ENCODE measurements at regions of chr3 and their contacts with region 1.

Region 1: DNA sequence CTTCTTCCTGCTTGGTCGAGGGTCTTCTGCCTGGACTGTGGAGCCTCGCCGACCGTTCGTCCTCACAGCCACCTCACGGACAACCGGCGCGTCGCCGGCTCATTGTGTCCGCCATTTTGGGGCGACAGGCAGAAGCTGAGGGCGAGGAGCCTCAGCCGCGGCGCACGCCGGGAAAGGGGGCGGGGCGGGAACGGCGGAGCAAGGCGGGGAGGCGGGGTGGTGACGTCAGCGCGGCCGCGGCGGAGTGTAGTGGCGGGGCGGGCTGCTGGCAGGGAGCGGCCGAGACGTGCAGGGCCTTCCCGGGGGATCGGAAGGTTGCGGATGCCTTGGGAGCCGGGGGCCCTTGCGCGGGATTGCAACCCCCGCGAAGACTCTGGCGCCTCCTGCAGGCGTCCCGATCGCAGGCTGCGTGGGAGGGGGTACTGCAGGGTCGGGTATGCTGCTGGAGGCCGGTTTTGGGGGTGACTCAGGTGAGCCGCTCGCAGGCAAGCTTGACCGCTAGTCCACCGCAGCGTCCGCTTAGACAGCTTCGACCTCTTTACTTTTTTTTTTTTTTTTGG is at the start of gene WDR82:
- DNase-seq: peak; percentile 98 to 99
- ATAC-seq: peak; percentile 93 to 95 (median 94)
- H3K4me3 ChIP-seq: peak within 1 kb of the TSS; percentile 77
- H3K27ac ChIP-seq: peak within 1 kb of the TSS; percentile 93
- H3K4me1 ChIP-seq: peaks cover 50% of the 10 kb centered on the region
- H3K27me3 ChIP-seq: no peaks in the 10 kb centered on the region
- CTCF ChIP-seq: peak; percentile 52
- total RNA-seq, gene WDR82: 62.1 to 93.1 (median 85.5) TPM

Region 2: GRCh38 chr3:52220380-52221026 is 58.1 kb before region 1 on chr3:
- intact Hi-C with region 1: no loop called
- DNase-seq: peak; percentile 86 to 93
- ATAC-seq: peak; percentile 68 to 78 (median 70)
- H3K4me3 ChIP-seq: no peak overlapping the region
- H3K27ac ChIP-seq: no peak overlapping the region
- H3K4me1 ChIP-seq: peaks cover 25% of the 10 kb centered on the region
- H3K27me3 ChIP-seq: no peaks in the 10 kb centered on the region
- CTCF ChIP-seq: peak; percentile 87

Region 3: DNA sequence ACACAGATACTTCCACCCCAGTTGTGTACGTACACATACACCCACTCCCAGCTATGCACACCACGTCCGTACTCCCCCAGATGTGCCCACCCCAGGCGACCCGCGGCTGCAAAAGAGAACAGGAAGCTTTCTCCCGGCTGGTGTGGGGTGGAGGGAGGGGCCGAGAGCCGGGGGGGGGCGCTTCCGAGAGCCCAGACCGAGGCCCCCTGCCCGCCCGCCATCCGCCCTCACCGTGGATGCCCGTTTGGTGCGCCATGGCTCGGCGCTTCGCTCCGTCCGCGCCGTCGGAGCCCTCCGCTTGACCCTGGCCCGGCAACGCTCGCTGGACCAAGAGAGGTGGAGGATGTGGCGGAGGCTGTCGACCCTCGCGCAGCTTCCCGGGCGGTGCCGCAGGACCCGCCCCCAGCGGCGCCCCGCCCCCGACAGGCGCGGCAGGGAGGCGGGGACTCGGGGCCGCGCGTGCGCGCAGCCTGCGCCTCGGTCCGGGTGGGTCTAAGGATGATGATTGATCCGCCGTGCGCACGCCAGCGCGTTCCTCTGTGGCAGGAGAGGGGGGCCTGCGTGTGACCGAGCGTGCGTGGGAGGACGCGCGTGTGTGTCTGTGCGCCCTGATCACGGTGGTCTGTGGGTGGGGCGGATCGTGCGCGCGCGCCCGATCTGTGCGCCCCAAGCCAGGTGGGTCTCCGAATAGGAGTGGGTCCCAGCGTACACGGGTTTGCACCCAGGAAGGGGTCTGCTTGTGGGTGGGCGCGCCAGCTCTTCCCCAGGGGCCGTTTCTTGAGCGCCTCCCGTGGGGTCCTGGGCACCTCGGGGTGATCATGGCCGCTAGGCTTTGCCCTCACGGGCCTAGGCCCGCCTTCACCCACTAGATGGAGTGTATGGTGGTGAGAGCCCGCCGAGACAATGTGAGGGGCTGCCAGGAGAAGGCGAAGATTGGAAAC is 39.6 kb before region 1 on chr3 and contains the start of gene TWF2:
- intact Hi-C with region 1: loop called (anchors 2 to 5 kb)
- DNase-seq: peak; percentile 80 to 86
- ATAC-seq: peak; percentile 53 to 61 (median 56)
- H3K4me3 ChIP-seq: peak within 1 kb of the TSS; percentile 80
- H3K27ac ChIP-seq: peak within 1 kb of the TSS; percentile 94
- H3K4me1 ChIP-seq: peaks cover 52% of the 10 kb centered on the region
- H3K27me3 ChIP-seq: no peaks in the 10 kb centered on the region
- CTCF ChIP-seq: peak; percentile 33
- total RNA-seq, gene TWF2: 74.9 to 224 (median 138) TPM

Region 4: DNA sequence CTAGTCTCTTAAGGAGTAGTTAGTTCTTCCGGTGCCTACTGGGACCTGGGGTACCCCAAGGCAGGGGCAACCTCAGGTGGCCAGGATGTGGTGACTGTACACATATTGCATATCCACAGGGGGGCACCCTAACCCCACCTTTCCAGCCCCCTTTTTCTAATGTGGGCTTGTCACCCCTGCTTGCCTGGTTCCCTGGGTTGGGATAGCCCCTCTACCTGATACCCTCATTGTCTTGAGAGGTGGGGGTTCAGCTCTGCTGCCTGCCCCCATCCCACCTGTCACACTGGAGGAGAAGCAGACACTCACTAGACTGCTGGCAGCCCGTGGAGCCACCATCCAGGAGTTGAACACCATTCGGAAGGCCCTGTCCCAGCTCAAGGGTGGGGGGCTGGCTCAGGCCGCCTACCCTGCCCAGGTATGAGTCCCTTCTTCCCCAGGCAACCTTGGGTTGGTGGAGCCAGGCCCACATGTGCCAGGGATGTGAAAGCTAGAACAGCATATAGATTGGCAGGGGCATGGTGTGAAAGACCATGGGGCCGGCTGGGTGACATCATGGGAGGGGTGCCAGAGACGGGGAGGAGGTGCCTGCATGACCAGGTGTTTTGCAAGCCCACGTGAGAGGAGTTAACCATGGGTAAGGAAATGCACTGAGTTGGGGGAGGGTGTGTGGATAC is 13.1 kb after region 1 on chr3:
- intact Hi-C with region 1: loop called in 1 of 2 experiments (anchors 1 kb)
- DNase-seq: no peak
- ATAC-seq: no peak
- H3K4me3 ChIP-seq: no peak overlapping the region
- H3K27ac ChIP-seq: no peak overlapping the region
- H3K4me1 ChIP-seq: peaks cover 14% of the 10 kb centered on the region
- H3K27me3 ChIP-seq: no peaks in the 10 kb centered on the region
- CTCF ChIP-seq: peak; percentile 27